CD8-positive, alpha-beta memory T cell (primary cell): ENCODE measurements at regions of chr1 and their contacts with region 1.

Region 1: GRCh38 chr1:40862008-40862863 is at the start of gene CITED4:
- DNase-seq: peak; percentile 93 to 98 (median 93)
- H3K4me3 ChIP-seq: peak within 1 kb of the TSS; percentile 71
- H3K4me3 Mint-ChIP-seq: peak within 1 kb of the TSS; percentile 90 to 99 (median 98)
- H3K27ac ChIP-seq: peak within 1 kb of the TSS; percentile 80
- H3K27ac Mint-ChIP-seq: peak within 1 kb of the TSS; percentile 70 to 98 (median 96)
- H3K4me1 ChIP-seq: peaks cover 15% of the 10 kb centered on the region
- H3K4me1 Mint-ChIP-seq: peaks cover 7 to 17% (median 10%) of the 10 kb centered on the region in 3 donors
- H3K27me3 ChIP-seq: no peaks in the 10 kb centered on the region
- H3K27me3 Mint-ChIP-seq: peaks cover 0 to 1% of the 10 kb centered on the region in 2 donors
- total RNA-seq, gene CITED4: 1.3 to 1.7 TPM

Region 2: DNA sequence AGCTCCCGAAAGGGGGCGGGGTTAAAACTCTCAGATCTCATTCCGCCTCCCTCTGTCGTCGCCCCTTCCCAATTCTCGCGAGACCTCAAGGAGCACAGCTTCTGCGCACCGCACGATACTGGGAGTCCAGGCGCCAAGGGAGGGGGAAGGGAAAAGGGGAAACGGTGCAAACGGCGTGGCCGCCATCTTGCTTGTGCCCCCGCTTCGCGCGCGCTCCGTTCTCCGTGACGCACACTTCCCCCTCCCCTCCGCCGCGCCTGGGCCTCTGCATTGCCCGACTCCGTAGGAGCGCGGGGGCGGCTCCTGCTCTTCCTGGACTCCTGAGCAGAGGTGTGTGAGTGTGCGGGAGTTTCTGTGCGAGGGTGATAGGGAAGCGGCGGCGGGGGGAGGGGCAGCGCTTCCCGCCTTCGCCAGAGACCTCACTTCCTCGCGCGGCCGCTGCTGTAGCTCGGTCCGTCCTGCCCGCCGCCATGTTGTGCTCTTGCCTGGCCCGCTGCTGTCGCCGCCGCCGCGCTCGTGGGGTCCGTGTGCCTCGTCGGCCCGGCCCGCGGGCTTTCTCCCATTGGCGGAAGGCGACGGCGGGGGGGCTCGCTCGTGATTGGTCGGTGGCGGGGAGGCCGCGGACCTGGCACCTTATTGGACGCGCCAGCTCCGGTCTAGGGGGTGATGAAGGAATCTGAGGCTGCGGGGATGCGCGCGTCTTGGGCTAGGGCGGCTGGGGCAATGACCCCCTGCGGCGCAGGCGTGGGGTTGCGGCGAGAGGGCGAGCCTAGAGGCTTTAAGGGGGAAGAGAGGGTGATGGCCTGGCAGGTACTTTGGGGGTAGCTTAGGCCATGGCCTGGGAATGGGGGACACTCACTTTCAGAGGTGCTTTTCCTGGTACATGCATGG is 170.5 kb before region 1 on chr1 and contains the start of gene NFYC:
- CTCF ChIA-PET with region 1: interaction called, 3 read pairs
- POLR2A ChIA-PET with region 1: interaction called, 23 read pairs
- DNase-seq: peak; percentile 89 to 97 (median 94)
- H3K4me3 ChIP-seq: peak within 1 kb of the TSS; percentile 94
- H3K4me3 Mint-ChIP-seq: peak within 1 kb of the TSS; percentile 90 to 100 (median 93)
- H3K27ac ChIP-seq: peak within 1 kb of the TSS; percentile 97
- H3K27ac Mint-ChIP-seq: peak within 1 kb of the TSS; percentile 92 to 100 (median 97)
- H3K4me1 ChIP-seq: peaks cover 41% of the 10 kb centered on the region
- H3K4me1 Mint-ChIP-seq: peaks cover 59 to 74% (median 71%) of the 10 kb centered on the region in 3 donors
- H3K27me3 ChIP-seq: no peaks in the 10 kb centered on the region
- H3K27me3 Mint-ChIP-seq: peaks cover 0 to 5% of the 10 kb centered on the region in 2 donors
- total RNA-seq, gene NFYC: 61.3 to 61.6 TPM

Region 3: DNA sequence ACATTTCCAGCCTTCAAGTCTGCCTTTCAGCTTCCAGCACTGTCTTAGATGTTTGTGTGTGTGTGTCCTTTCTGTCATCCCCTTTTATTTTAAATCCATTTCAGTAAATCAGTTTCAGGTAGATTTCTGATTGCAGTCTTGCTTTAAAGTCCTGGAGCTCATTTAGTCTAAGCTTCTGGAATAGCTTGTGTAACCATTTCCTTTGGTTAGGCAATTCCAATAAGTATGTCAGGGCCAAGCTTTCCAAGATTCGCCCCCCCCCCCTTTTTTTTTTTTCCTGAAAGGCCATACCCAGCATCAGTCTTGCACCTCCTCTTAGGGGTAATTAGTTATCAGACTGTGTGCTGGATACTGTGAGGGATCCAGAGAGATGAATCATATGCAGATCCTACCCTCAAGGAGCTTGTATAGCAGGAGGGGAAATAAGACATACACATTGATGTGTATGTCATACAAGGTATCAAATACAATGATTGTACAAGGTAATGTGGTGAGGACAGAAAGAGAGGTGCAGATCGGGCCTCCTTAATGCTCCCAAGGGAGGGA is 129.4 kb before region 1 on chr1:
- CTCF ChIA-PET with region 1: no interaction called
- POLR2A ChIA-PET with region 1: no interaction called
- DNase-seq: no peak
- H3K4me3 ChIP-seq: no peak overlapping the region
- H3K4me3 Mint-ChIP-seq: no peak overlapping the region
- H3K27ac ChIP-seq: no peak overlapping the region
- H3K27ac Mint-ChIP-seq: peak overlapping the region in 3 of 8 donors; percentile 26 to 86 (median 63)
- H3K4me1 ChIP-seq: peaks cover 5% of the 10 kb centered on the region
- H3K4me1 Mint-ChIP-seq: peaks cover 43 to 66% (median 59%) of the 10 kb centered on the region in 3 donors
- H3K27me3 ChIP-seq: no peaks in the 10 kb centered on the region
- H3K27me3 Mint-ChIP-seq: no peaks in the 10 kb centered on the region

Region 4: DNA sequence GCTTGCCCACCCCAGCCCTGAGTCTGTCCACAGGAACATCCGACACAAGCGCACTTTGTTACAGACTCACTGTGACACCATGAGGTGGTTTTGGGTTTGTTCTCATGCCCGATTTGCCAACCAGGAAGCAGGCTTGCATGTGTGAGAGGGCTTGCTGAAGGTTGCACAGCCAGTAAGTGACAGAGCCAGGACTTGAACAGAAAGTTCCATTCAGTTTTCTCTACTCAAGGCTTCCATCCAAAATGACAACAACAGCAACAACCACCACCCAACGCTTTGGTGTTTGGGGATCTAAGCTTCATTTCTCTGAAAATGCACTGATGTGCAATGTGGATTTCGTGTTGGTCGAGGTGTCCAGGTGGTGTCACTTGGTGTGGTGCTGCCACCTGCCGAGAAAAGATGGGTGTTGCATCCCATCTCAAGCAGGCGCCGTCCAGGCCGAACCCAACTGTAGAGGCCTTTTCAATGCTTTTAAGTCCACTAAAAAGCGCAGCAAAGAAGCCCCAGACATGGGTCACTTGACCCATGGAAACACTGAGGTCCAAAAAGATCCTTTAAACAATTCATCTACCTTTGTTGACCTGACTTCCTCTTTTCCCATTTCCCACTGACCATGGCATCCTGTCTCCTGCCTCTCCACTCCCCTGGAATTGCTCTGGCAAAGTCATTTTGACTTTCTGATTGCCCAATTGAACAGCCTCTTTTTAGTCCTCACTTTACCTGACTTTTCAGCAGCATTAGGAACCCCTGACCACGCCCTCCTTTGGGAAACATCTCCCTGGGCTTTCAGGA is 12.2 kb before region 1 on chr1:
- CTCF ChIA-PET with region 1: interaction called, 28 read pairs
- POLR2A ChIA-PET with region 1: interaction called, 4 read pairs
- DNase-seq: peak; percentile 63 to 81 (median 68)
- H3K4me3 ChIP-seq: no peak overlapping the region
- H3K4me3 Mint-ChIP-seq: peak overlapping the region in 6 of 7 donors; percentile 6 to 62 (median 52)
- H3K27ac ChIP-seq: no peak overlapping the region
- H3K27ac Mint-ChIP-seq: peak overlapping the region in 5 of 8 donors; percentile 13 to 61 (median 47)
- H3K4me1 ChIP-seq: peaks cover 11% of the 10 kb centered on the region
- H3K4me1 Mint-ChIP-seq: peaks cover 10 to 19% (median 18%) of the 10 kb centered on the region in 3 donors
- H3K27me3 ChIP-seq: no peaks in the 10 kb centered on the region
- H3K27me3 Mint-ChIP-seq: peaks cover 0 to 2% of the 10 kb centered on the region in 2 donors

Region 5: GRCh38 chr1:40877698-40878097 is 15.5 kb after region 1 on chr1:
- CTCF ChIA-PET with region 1: no interaction called
- POLR2A ChIA-PET with region 1: interaction called, 16 read pairs
- DNase-seq: no peak
- H3K4me3 ChIP-seq: no peak overlapping the region
- H3K4me3 Mint-ChIP-seq: no peak overlapping the region
- H3K27ac ChIP-seq: no peak overlapping the region
- H3K27ac Mint-ChIP-seq: peak overlapping the region in 3 of 8 donors; percentile 42 to 80 (median 75)
- H3K4me1 ChIP-seq: peaks cover 14% of the 10 kb centered on the region
- H3K4me1 Mint-ChIP-seq: peaks cover 30 to 35% (median 34%) of the 10 kb centered on the region in 3 donors
- H3K27me3 ChIP-seq: no peaks in the 10 kb centered on the region
- H3K27me3 Mint-ChIP-seq: peaks cover 3 to 15% of the 10 kb centered on the region in 2 donors

Region 6: GRCh38 chr1:40979233-40980067 is 117.2 kb after region 1 on chr1 and contains the start of gene CTPS1:
- CTCF ChIA-PET with region 1: interaction called, 3 read pairs
- POLR2A ChIA-PET with region 1: interaction called, 12 read pairs
- DNase-seq: peak; percentile 92 to 96 (median 94)
- H3K4me3 ChIP-seq: peak within 1 kb of the TSS; percentile 69
- H3K4me3 Mint-ChIP-seq: peak within 1 kb of the TSS; percentile 87 to 98 (median 95)
- H3K27ac ChIP-seq: peak within 1 kb of the TSS; percentile 76
- H3K27ac Mint-ChIP-seq: peak within 1 kb of the TSS; percentile 94 to 99 (median 95)
- H3K4me1 ChIP-seq: peaks cover 27% of the 10 kb centered on the region
- H3K4me1 Mint-ChIP-seq: peaks cover 22 to 36% (median 27%) of the 10 kb centered on the region in 3 donors
- H3K27me3 ChIP-seq: no peaks in the 10 kb centered on the region
- H3K27me3 Mint-ChIP-seq: no peaks in the 10 kb centered on the region
- total RNA-seq, gene CTPS1: 151 to 156 TPM